ENCODE measurements at regions of chr7 and their contacts with region 1.

Region 1: GRCh38 chr7:116236020-116236630 is 25.8 kb downstream of the TES start:
- DNase-seq: no peak
- H3K4me3 Mint-ChIP-seq: no peak overlapping the region
- H3K27ac Mint-ChIP-seq: no peak overlapping the region
- H3K4me1 Mint-ChIP-seq: peaks cover 45% of the 10 kb centered on the region
- H3K27me3 Mint-ChIP-seq: no peaks in the 10 kb centered on the region

Region 2: GRCh38 chr7:116087291-116087690 is 148.8 kb before region 1 on chr7:
- intact Hi-C with region 1: no loop called
- DNase-seq: no peak
- H3K4me3 Mint-ChIP-seq: no peak overlapping the region
- H3K27ac Mint-ChIP-seq: no peak overlapping the region
- H3K4me1 Mint-ChIP-seq: no peaks in the 10 kb centered on the region
- H3K27me3 Mint-ChIP-seq: no peaks in the 10 kb centered on the region

Region 3: GRCh38 chr7:116138202-116138801 is 97.8 kb before region 1 on chr7:
- intact Hi-C with region 1: loop called (anchors 1 kb)
- DNase-seq: no peak
- H3K4me3 Mint-ChIP-seq: no peak overlapping the region
- H3K27ac Mint-ChIP-seq: no peak overlapping the region
- H3K4me1 Mint-ChIP-seq: peaks cover 13% of the 10 kb centered on the region
- H3K27me3 Mint-ChIP-seq: peaks cover 26% of the 10 kb centered on the region

Region 4: DNA sequence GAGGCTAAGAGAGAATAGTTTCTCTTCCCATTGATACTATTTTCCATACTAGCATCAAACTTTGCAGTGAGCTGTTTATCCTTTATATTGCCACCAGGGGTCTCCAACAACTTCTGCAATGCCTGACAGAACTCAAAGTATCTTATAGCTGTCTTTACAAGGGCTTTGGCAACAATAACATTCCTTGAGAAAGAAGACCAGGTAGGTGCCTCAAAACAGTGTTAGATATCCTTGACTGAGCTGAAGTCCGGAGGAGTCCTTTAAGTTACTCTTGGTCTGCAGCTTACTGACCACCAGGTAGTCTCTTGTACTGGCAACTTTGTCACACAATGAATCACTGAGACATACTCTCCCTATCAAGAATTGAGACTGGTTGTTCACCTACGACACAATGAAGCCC is 55.8 kb before region 1 on chr7:
- intact Hi-C with region 1: loop called (anchors 1 kb)
- DNase-seq: no peak
- H3K4me3 Mint-ChIP-seq: no peak overlapping the region
- H3K27ac Mint-ChIP-seq: no peak overlapping the region
- H3K4me1 Mint-ChIP-seq: no peaks in the 10 kb centered on the region
- H3K27me3 Mint-ChIP-seq: peaks cover 7% of the 10 kb centered on the region

Region 5: GRCh38 chr7:116211006-116211912 is 24.9 kb before region 1 on chr7:
- intact Hi-C with region 1: loop called (anchors 2 kb)
- DNase-seq: peak; percentile 73
- H3K4me3 Mint-ChIP-seq: peak overlapping the region; percentile 96
- H3K27ac Mint-ChIP-seq: peak overlapping the region; percentile 95
- H3K4me1 Mint-ChIP-seq: peaks cover 50% of the 10 kb centered on the region
- H3K27me3 Mint-ChIP-seq: no peaks in the 10 kb centered on the region

Region 6: DNA sequence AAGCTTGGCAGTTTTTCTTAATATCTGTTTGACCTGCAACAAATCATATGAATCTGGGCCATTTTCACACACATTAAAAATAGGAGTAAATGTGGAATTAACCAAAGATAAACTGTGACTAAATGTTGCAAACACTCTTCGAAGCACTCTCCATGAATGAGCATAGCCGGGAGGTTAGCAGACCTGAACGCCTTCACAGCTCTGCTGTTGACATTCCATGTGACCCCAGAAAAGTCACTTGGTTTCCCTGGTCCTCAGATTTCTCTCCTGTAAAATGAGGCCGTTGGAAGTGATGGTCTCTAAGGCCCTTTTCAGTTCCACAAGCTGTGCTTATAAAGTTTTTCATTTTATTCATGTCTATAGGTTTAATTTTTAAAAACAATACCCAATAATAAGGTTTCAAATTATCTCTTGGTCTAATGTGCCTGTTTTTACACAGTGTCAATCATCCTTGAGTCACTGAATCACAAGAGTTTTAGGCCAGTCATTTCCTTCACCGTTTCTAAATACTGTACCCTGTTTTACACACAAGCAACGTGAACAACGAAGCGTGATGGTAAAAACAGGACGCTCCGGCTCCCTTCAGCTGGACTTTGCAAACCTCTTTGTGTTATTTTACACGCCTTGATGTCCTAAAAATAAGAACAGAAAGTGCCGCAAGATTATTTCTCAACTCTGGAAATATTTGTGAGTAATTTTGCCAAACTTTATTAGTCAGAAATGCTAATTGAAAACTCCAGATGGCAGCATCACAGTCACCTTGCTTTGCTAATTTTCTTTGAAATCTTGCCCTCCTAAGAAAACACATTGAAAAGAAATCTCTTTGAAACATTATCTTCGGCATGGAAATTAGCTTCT is 397.2 kb after region 1 on chr7:
- intact Hi-C with region 1: no loop called
- DNase-seq: no peak
- H3K4me3 Mint-ChIP-seq: no peak overlapping the region
- H3K27ac Mint-ChIP-seq: no peak overlapping the region
- H3K4me1 Mint-ChIP-seq: peaks cover 1% of the 10 kb centered on the region
- H3K27me3 Mint-ChIP-seq: peaks cover 19% of the 10 kb centered on the region

Region 7: DNA sequence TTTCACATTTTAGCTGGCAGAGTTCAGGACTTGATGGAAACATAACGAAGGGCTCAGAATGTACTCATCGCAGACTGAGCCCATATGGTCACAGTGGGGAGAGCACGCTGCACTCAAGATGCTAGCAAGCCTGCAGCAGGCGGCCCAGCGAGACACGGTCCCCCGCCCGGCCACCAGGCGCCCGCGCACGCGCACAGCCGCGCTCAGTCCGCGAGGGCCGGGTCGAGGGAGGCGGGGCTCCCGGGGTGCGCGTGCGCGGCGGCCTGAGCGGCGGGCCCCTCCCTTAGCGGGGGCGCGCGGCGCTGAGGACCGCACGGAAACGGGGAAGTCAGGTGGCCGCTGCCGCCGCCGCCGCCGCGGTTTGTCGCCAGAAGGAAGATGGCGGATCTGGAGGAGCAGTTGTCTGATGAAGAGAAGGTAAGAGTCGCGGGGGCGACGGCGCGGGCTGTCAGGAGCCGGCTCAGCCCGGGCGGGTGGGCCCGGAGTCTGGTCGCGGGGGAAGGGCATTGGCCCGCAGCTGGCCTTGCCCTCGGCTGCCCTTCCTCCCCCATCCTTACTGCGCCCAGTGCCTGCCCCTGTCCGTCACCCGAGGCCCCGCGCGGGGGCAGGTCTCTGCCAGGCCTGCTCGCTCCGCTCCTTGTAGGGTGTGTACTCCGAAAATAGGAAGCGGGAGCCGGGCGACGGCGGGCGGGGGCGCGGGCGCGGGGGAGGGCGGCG is 626.3 kb after region 1 on chr7 and contains the start of gene CAPZA2:
- intact Hi-C with region 1: loop called (anchors 5 kb)
- DNase-seq: peak; percentile 92
- H3K4me3 Mint-ChIP-seq: peak within 1 kb of the TSS; percentile 96
- H3K27ac Mint-ChIP-seq: peak within 1 kb of the TSS; percentile 98
- H3K4me1 Mint-ChIP-seq: peaks cover 30% of the 10 kb centered on the region
- H3K27me3 Mint-ChIP-seq: peaks cover 20% of the 10 kb centered on the region
- total RNA-seq, gene CAPZA2: 128 and 147 TPM in 2 replicates